ENCODE measurements at regions of chrX and their contacts with region 1.

Region 1: DNA sequence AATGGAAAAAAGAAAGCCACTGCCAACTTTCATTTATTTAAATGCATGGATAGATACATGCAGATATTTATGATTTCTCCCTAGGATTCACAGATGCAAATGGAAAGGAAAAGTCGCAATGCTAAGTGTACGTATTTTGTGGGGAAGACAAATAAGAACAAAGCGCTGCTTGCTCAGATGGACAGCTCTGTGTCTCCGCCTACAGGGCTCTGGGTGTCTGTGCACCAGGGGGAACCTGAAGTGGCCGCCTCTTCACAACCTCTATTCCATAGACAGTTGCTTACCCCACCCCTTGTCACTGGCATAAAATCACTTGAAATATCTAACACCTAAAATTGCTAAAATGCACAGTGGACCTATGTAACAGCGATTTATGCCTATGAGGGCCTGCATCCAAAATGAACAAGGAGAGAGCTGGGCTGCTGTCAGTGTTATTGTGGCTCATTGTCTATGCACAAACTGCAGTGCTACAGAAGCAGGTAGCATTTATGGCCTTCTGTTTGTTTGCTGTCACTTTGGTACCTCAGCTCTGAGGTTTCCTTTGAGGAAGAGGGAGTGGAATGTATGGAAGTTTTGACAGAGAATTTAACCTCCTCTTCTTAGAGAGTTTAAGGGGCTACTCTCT is 58.6 kb upstream of the PAGE1 start:
- DNase-seq: no peak

Region 2: DNA sequence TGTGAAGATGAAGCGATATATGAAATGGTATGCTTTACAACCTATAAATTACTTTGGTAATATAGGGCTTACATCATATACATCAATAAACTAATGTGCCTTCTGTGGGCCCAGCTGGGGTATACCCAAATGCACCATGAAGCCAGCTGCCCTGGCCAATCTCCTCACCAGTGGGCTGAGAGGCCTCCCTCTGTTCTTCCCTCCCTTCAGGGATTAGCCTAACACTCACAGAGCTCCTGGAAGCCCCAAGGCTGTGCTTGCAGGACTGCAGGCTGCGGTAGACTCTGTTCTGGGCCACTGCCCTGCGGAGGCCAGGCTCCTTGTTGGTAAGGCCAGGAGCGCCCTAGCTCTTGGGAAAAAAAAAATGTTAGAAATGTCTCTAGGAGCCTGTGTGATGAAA is 92.5 kb before region 1 on chrX:
- intact Hi-C with region 1: loop called in 1 of 2 experiments (anchors 10 kb)
- DNase-seq: no peak

Region 3: GRCh38 chrX:49704691-49705404 is 49.5 kb before region 1 on chrX:
- intact Hi-C with region 1: no loop called
- DNase-seq: no peak

Region 4: DNA sequence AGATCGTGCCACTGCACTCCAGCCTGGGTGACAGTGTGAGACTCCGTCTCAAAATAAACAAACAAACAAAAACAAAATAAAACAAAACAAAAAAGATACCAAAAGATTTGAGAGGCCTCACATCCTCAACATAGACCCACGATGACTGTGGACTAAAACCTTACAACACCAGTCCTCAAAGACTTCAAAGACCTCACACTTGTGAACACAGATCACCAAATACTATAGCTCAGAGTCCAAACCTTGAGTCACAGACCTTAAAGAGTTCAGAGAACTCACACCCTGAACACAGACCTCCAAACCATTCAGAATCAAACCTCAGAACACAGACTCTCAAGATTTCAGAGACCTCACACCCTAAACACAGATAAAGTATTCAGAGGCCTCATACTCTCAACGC is 62.1 kb after region 1 on chrX:
- intact Hi-C with region 1: no loop called
- DNase-seq: no peak

Region 5: DNA sequence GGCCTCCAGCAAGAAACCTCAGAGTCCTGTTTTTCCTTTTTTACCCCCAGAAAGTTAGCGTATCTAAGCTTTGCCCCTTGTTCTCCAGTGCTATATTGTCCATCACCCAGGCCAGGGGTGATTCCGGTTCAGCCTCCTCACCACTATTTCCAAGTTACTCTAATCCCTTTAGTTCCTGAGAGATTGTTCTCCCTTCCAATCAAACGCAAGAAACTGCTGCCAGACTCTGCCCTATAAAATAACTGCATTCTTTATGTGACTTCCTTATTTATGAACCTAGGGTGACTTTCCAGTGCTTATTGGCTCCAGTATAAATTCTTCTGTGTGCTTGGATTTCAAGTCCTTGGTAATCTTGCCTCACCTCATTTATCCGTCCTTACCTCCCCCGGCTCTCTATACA is 233.8 kb after region 1 on chrX:
- intact Hi-C with region 1: no loop called
- DNase-seq: no peak

Region 6: DNA sequence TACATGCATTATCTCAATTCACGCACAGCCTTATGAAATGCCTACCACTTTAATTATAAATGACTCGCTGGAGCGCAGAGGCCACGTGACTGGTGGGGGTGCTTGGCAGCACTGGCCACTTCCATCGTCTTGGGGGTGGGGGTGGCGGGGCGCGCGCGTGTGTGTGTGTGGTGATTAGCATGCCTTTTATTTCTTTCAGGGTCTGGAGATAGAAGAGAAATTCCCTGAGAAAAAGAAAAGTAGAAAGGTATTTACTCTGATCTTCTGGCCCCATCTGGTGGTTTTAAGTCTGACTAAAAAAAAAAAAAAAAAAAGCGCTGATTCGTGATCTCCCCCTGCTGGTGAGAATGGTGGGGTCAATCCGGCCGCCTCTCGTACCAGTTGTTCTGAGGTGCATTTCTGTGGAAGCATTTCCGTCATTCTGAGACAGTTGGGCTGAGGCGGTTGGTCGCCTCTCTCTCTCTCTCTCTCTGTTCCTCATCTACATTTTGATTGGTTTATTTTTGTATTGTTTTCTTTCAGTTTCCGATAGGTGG is 450.1 kb after region 1 on chrX and contains the start of gene CCNB3:
- intact Hi-C with region 1: no loop called
- DNase-seq: peak; percentile 88
- total RNA-seq, gene CCNB3: 0.76 to 1.4 TPM

Measured in posterior vena cava (tissue), 2 donors.